SK-N-SH (cell line): ENCODE measurements at regions of chr10 and their contacts with region 1.

Region 1: DNA sequence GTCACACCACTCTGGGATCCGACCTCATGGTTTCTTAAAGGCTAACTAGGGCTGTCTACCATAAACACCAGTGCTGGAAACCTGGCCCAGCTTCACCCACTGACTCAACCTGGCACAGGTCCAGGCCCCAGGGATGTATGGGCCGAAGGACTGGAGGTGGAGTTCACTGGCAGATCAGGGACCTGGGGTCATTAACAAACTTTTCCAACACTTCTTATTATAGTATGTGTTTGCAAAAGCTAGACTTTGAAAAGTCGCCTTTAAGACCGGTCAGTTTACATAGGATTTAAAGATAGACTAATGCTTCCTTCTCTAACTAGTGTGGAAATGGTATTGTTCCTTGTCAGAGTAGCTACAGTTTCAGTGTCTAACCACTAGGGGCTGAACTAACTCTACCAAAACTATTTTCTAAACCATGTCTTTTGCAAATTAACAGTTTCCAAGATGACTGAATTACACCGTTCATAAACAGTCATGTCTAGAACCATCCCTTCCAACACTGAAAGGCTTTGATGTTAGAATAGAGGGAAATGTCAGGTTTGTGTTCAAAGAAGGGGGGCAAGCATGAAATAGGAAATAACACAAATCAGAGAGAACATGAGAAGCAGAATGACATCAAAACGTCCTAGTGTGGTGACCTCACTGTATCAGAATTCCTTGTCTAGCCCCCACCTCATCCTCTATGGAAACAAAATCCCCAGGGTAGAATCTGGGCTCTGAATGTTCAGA is 29.7 kb downstream of the STN1 start:
- DNase-seq: peak; percentile 51
- H3K4me3 ChIP-seq: peak overlapping the region in 1 of 2 experiments; percentile 0; a peak in 1 of 4 replicates
- H3K27ac ChIP-seq: peak overlapping the region; percentile 43 to 70
- H3K4me1 ChIP-seq: peaks cover 8 to 18% of the 10 kb centered on the region in 2 experiments; a peak in 2 of 4 replicates
- H3K27me3 ChIP-seq: no peaks in the 10 kb centered on the region
- CTCF ChIP-seq: peak; percentile 94
- EP300 ChIP-seq: no peak
- RAD21 ChIP-seq: peak; percentile 95

Region 2: DNA sequence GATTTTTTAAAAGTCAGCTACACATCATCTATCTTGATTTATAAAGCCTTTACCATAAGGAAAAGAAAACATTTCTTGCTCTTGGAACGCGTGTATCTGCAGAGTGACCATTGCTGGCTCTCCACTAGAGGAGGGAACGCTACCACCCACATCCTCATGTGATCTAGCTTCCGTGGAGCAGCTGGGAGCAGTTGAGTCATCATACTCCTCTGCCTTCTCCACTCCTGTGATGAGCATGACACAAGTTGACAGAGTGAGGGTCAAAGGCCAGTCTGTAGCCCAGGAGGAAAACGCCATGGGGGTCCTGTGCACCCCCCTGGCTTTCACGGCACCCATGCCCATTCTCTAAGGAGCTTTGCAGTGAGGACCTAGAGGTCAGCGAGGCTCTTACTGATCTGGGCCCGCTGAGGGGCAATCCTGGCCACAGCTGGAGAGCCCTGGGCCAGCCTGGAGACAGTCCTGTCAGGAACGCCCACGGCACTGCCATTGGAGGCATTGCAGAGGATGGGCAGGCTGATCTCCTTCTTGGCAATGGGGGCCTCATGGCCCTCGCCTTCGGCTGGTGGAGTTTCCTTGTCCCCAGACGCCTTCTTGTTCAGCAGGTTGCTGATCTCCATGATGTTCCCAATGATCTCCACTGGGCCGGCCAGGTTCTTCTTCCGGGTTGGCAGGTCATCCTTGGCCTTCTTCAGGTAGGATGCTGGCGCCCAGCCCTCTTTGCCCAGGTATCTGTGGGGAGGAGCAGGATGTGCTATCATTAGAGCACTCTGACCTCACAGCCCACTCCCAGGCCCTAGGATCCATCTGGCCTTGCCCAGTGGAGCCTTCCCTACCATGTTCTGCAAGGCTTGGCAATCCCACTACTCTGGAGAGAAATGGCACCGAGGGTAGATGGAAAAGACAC is 275.6 kb before region 1 on chr10:
- CTCF ChIA-PET with region 1: interaction called, 10 read pairs
- POLR2A ChIA-PET with region 1: no interaction called
- DNase-seq: no peak
- H3K4me3 ChIP-seq: no peak overlapping the region
- H3K27ac ChIP-seq: peak overlapping the region in 1 of 2 experiments; percentile 95; a peak in 2 of 4 replicates
- H3K4me1 ChIP-seq: peaks cover 0 to 67% of the 10 kb centered on the region in 2 experiments; a peak in 2 of 4 replicates
- H3K27me3 ChIP-seq: no peaks in the 10 kb centered on the region
- CTCF ChIP-seq: no peak
- EP300 ChIP-seq: no peak
- RAD21 ChIP-seq: no peak

Region 3: DNA sequence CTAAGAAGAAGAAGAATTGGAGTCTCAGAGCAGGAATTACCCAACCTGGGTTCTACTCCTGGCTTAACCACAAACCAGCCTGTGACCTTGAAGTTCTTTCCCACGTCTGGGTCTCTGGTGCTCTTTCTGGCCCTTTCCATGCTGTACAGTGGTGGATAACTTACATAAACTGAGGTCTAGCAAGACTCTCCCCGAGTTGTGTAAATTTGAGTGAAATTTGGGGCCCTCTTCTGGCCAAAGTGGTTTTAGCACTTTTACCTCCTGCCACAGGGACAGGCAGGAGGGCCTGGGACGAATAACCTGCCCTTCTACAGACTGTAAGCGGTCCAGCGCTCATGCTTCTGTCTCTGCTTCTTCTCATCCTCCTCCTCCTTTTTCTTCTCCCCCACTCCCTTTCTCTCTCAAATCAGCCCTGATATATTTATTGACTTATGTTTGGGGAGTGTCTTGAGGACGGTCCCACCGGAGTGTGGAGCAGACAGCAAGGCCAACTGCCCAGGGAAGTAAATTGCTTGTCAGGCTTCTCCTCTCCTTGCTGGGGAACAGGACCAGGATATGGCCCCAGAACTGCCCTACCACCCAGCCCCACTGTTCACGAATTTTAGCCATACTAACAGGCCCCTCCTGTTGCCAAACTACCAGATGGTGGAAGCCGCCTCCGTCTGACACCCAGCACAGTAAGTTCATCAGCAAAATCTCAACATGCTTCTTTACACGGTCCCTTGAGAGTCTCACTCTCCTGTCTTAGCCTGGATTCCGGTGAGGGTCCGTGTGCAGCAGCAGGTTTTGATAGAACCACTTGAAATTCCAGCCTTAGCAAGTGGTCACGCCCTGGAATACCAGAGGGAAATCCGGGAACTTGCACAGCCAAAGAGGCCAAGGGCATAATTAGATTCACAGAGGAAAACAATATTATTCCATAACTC is 28.9 kb before region 1 on chr10:
- CTCF ChIA-PET with region 1: interaction called, 15 read pairs
- POLR2A ChIA-PET with region 1: no interaction called
- DNase-seq: peak; percentile 71
- H3K4me3 ChIP-seq: no peak overlapping the region
- H3K27ac ChIP-seq: no peak overlapping the region; a peak in 1 of 4 replicates
- H3K4me1 ChIP-seq: peaks cover 0 to 19% of the 10 kb centered on the region in 2 experiments; a peak in 2 of 4 replicates
- H3K27me3 ChIP-seq: no peaks in the 10 kb centered on the region
- CTCF ChIP-seq: peak; percentile 78
- EP300 ChIP-seq: no peak
- RAD21 ChIP-seq: peak; percentile 87

Region 4: DNA sequence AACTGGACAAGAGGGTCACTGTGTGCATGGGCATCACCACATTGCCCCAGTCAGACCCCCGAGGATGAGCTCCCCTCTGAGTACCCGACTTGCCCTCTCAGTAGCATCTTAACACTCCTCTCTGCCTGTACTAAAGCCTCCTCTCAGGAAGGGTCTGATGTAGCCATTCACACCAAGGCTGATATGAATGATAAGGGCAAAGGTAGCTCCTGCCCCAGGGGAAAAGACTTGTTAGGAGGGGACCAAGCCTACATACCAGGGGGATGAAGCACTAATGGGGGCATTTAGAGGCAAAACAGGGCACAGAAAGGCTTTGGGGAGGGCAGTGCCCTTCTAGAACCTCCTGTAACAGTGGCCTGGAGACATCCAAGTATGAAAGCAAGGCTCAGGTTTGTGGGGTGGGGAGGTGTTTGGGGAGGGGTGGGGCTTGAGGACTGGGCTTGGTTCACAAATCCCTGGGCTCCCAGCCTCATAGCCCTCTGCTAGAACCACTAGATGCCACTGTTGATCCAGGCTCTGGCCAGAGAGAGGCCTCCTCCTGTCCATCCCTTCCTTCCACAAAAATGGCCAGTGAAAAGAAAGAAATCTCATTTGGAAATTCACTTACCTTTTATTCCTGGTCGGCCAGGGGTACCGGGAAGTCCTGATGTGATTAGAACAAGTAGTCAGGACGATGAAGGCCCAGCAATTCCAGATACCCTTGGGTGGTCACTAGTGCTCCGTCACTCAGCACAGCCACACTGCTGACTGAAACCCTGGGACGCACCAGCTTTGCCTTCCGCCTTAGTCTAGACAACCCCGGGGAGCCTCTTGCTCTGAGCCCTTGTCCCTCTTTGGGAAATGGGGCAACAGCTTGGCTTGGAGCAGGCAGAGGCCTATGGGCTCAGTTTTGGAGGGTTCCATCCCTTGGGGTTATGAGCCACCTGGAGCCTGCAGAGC is 157.1 kb after region 1 on chr10:
- CTCF ChIA-PET with region 1: interaction called, 11 read pairs
- POLR2A ChIA-PET with region 1: no interaction called
- DNase-seq: peak; percentile 74
- H3K4me3 ChIP-seq: no peak overlapping the region
- H3K27ac ChIP-seq: no peak overlapping the region
- H3K4me1 ChIP-seq: peaks cover 0 to 2% of the 10 kb centered on the region in 2 experiments; a peak in 1 of 4 replicates
- H3K27me3 ChIP-seq: no peaks in the 10 kb centered on the region
- CTCF ChIP-seq: peak; percentile 77
- EP300 ChIP-seq: no peak
- RAD21 ChIP-seq: peak; percentile 89

Region 5: GRCh38 chr10:104209575-104210198 is 321.4 kb after region 1 on chr10:
- CTCF ChIA-PET with region 1: interaction called, 11 read pairs
- POLR2A ChIA-PET with region 1: no interaction called
- DNase-seq: peak; percentile 67
- H3K4me3 ChIP-seq: no peak overlapping the region; a peak in 1 of 4 replicates
- H3K27ac ChIP-seq: no peak overlapping the region
- H3K4me1 ChIP-seq: no peaks in the 10 kb centered on the region; a peak in 1 of 4 replicates
- H3K27me3 ChIP-seq: no peaks in the 10 kb centered on the region; the same call in 1 of the 2 replicates
- CTCF ChIP-seq: peak; percentile 67
- EP300 ChIP-seq: no peak
- RAD21 ChIP-seq: peak; percentile 89